ENCODE measurements at regions of chr19 and their contacts with region 1.

Region 1: GRCh38 chr19:53365134-53365898 is at the start of gene ZNF525:
- DNase-seq: peak; percentile 95 to 99 (median 97)
- ATAC-seq: peak; percentile 100
- H3K4me3 ChIP-seq: peak within 1 kb of the TSS; percentile 85 to 99
- H3K4me3 Mint-ChIP-seq: peak within 1 kb of the TSS; percentile 96
- H3K27ac ChIP-seq: peak within 1 kb of the TSS; percentile 86 to 91
- H3K27ac Mint-ChIP-seq: peak within 1 kb of the TSS; percentile 99
- H3K4me1 ChIP-seq: peaks cover 9% of the 10 kb centered on the region
- H3K4me1 Mint-ChIP-seq: peaks cover 29% of the 10 kb centered on the region
- H3K27me3 ChIP-seq: no peaks in the 10 kb centered on the region
- H3K27me3 Mint-ChIP-seq: no peaks in the 10 kb centered on the region
- CTCF ChIP-seq: peak; percentile 54
- total RNA-seq, gene ZNF525: 25.6 to 26.4 TPM

Region 2: DNA sequence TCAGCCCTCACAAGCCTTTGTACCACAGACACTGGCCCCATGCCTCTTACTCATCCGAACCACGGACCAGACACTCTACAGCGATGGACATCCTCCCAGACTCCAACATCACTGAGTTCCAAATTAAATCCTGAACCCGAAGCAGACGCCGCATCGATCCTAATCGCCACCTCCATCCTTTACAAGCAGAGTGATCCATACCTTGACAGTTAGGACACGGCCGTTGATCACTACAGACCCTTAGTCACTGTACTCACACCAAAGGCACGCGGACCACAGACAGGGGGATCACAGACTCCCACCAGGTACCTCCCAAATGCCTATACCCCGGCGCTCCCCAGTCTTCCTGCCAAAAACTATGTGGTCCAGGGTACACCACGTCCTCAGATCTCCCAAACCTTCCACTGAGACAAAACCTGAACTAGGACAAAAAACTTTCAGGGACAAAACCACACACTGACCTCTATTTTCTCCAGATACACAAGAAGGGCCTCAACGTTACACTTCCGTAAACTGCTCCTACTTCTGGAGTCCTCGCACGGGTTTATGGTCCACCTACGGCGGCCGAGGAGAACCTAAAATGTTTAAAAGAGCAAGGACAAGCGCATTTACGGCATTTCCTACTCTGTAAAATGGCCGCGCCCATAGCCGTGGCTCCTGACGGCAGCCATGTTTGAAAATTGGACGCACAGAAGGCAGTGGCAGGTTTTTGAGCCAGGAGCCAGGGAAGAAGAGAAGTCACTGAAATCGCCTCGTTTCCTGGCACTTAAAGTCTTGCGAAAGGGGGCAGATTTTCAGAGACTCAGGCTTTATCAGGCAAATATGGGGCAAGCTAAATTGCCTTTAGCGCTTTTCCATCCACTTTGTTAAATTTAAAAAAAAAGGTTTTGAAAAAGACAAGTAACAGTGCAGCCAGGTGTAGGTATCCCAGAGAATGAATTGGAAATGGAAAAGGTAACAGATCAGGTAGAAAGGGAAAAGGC is 1378.7 kb before region 1 on chr19 and contains the start of gene ZNF350:
- CTCF ChIA-PET with region 1: no interaction called
- POLR2A ChIA-PET with region 1: no interaction called
- intact Hi-C with region 1: loop called in 1 of 2 experiments (anchors 1 kb)
- DNase-seq: peak; percentile 74 to 96 (median 88)
- ATAC-seq: peak; percentile 99
- H3K4me3 ChIP-seq: peak within 1 kb of the TSS; percentile 85 to 92
- H3K4me3 Mint-ChIP-seq: peak within 1 kb of the TSS; percentile 96
- H3K27ac ChIP-seq: peak within 1 kb of the TSS; percentile 71 to 77
- H3K27ac Mint-ChIP-seq: peak within 1 kb of the TSS; percentile 95
- H3K4me1 ChIP-seq: peaks cover 5% of the 10 kb centered on the region
- H3K4me1 Mint-ChIP-seq: peaks cover 21% of the 10 kb centered on the region
- H3K27me3 ChIP-seq: no peaks in the 10 kb centered on the region
- H3K27me3 Mint-ChIP-seq: no peaks in the 10 kb centered on the region
- CTCF ChIP-seq: no peak
- total RNA-seq, gene ZNF350: 48.1 to 50.8 TPM

Region 3: DNA sequence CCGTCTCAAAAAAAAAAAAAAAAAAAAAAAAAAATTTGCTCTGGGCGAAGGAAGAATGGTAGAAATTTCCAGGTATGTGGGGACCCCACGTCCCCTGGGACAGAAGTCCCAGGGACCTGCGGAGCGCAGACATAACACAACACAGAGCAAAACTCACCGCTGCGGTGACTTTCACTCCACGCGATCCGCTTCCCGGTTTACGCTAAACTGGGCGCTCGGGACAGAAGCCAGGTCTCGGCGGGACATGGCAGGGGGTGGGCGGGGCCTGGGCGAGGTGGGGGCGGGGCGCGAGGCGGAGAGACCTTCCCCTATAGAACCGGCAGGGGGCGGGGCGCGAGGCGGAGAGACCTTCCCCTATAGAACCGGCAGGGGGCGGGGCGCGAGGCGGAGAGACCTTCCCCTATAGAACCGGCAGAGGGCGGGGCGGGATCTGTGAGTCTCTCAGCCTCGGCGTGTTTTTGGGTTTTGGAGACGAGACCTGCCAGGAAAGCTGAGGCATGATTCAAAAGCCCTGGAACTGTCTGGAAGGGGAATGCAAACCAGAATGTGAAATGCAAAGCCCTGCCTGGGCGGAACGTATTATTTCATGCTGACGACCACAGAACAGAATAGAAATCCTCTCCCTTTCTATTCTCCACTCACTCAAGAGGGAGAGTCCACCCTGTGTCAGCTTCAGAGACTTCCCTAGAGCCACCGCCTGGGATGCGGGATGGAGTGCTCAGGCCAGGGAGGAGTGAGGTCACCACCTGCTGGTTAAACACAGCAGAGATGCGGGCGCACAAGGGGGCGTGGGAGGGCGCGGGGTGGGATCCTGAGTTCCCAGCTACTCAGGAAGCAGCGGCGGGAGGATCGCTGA is 371.8 kb before region 1 on chr19:
- CTCF ChIA-PET with region 1: no interaction called
- POLR2A ChIA-PET with region 1: no interaction called
- intact Hi-C with region 1: loop called (anchors 1 to 10 kb)
- DNase-seq: peak; percentile 64 to 84 (median 77)
- ATAC-seq: peak; percentile 96
- H3K4me3 ChIP-seq: peak overlapping the region; percentile 38 to 65
- H3K4me3 Mint-ChIP-seq: peak overlapping the region; percentile 90
- H3K27ac ChIP-seq: no peak overlapping the region
- H3K27ac Mint-ChIP-seq: peak overlapping the region; percentile 60
- H3K4me1 ChIP-seq: peaks cover 6% of the 10 kb centered on the region
- H3K4me1 Mint-ChIP-seq: peaks cover 23% of the 10 kb centered on the region
- H3K27me3 ChIP-seq: no peaks in the 10 kb centered on the region
- H3K27me3 Mint-ChIP-seq: peaks cover 4% of the 10 kb centered on the region
- CTCF ChIP-seq: peak; percentile 81

Region 4: GRCh38 chr19:53224606-53225005 is 140.7 kb before region 1 on chr19:
- CTCF ChIA-PET with region 1: no interaction called
- POLR2A ChIA-PET with region 1: no interaction called
- intact Hi-C with region 1: no loop called
- DNase-seq: no peak
- ATAC-seq: no peak
- H3K4me3 ChIP-seq: no peak overlapping the region
- H3K4me3 Mint-ChIP-seq: no peak overlapping the region
- H3K27ac ChIP-seq: no peak overlapping the region
- H3K27ac Mint-ChIP-seq: no peak overlapping the region
- H3K4me1 ChIP-seq: no peaks in the 10 kb centered on the region
- H3K4me1 Mint-ChIP-seq: no peaks in the 10 kb centered on the region
- H3K27me3 ChIP-seq: no peaks in the 10 kb centered on the region
- H3K27me3 Mint-ChIP-seq: no peaks in the 10 kb centered on the region
- CTCF ChIP-seq: no peak

Region 5: GRCh38 chr19:53254411-53255341 is 110.6 kb before region 1 on chr19 and contains the start of gene ZNF677:
- CTCF ChIA-PET with region 1: no interaction called
- POLR2A ChIA-PET with region 1: no interaction called
- intact Hi-C with region 1: loop called in 1 of 2 experiments (anchors 1 kb)
- DNase-seq: peak; percentile 60 to 90 (median 82)
- ATAC-seq: peak; percentile 99
- H3K4me3 ChIP-seq: peak within 1 kb of the TSS; percentile 75 to 98
- H3K4me3 Mint-ChIP-seq: peak within 1 kb of the TSS; percentile 84
- H3K27ac ChIP-seq: peak within 1 kb of the TSS in 1 of 2 experiments; percentile 75
- H3K27ac Mint-ChIP-seq: peak within 1 kb of the TSS; percentile 81
- H3K4me1 ChIP-seq: peaks cover 11% of the 10 kb centered on the region
- H3K4me1 Mint-ChIP-seq: peaks cover 9% of the 10 kb centered on the region
- H3K27me3 ChIP-seq: no peaks in the 10 kb centered on the region
- H3K27me3 Mint-ChIP-seq: no peaks in the 10 kb centered on the region
- CTCF ChIP-seq: no peak
- total RNA-seq, gene ZNF677: 7.8 to 8.3 TPM

Region 6: GRCh38 chr19:53394974-53395839 is 29.9 kb after region 1 on chr19 and contains the start of gene ZNF765:
- CTCF ChIA-PET with region 1: interaction called, 3 read pairs
- POLR2A ChIA-PET with region 1: no interaction called
- intact Hi-C with region 1: loop called (anchors 1 kb)
- DNase-seq: peak; percentile 94 to 99 (median 97)
- ATAC-seq: peak; percentile 99
- H3K4me3 ChIP-seq: peak within 1 kb of the TSS; percentile 86 to 97
- H3K4me3 Mint-ChIP-seq: peak within 1 kb of the TSS; percentile 96
- H3K27ac ChIP-seq: peak within 1 kb of the TSS; percentile 78 to 84
- H3K27ac Mint-ChIP-seq: peak within 1 kb of the TSS; percentile 96
- H3K4me1 ChIP-seq: peaks cover 12% of the 10 kb centered on the region
- H3K4me1 Mint-ChIP-seq: peaks cover 36% of the 10 kb centered on the region
- H3K27me3 ChIP-seq: no peaks in the 10 kb centered on the region
- H3K27me3 Mint-ChIP-seq: no peaks in the 10 kb centered on the region
- CTCF ChIP-seq: peak; percentile 53
- total RNA-seq, gene ZNF765: 9.6 to 12.4 TPM

Region 7: GRCh38 chr19:53467485-53468262 is 102.4 kb after region 1 on chr19 and contains the start of gene ZNF813:
- CTCF ChIA-PET with region 1: no interaction called
- POLR2A ChIA-PET with region 1: no interaction called
- intact Hi-C with region 1: loop called (anchors 1 kb)
- DNase-seq: peak; percentile 93 to 98 (median 95)
- ATAC-seq: peak; percentile 98
- H3K4me3 ChIP-seq: peak within 1 kb of the TSS; percentile 73 to 91
- H3K4me3 Mint-ChIP-seq: peak within 1 kb of the TSS; percentile 92
- H3K27ac ChIP-seq: peak within 1 kb of the TSS; percentile 64 to 79
- H3K27ac Mint-ChIP-seq: peak within 1 kb of the TSS; percentile 89
- H3K4me1 ChIP-seq: peaks cover 7% of the 10 kb centered on the region
- H3K4me1 Mint-ChIP-seq: peaks cover 26% of the 10 kb centered on the region
- H3K27me3 ChIP-seq: no peaks in the 10 kb centered on the region
- H3K27me3 Mint-ChIP-seq: peaks cover 18% of the 10 kb centered on the region
- CTCF ChIP-seq: no peak
- total RNA-seq, gene ZNF813: 3.8 TPM